CD14-positive monocyte (primary cell): ENCODE measurements at regions of chr9 and their contacts with region 1.

Region 1: GRCh38 chr9:114304416-114305188 is 18.3 kb upstream of the ORM1 start:
- DNase-seq: peak in 1 of 3 donors; percentile 2
- H3K4me3 ChIP-seq: no peak overlapping the region
- H3K4me3 Mint-ChIP-seq: no peak overlapping the region
- H3K27ac ChIP-seq: no peak overlapping the region
- H3K27ac Mint-ChIP-seq: no peak overlapping the region
- H3K4me1 ChIP-seq: no peaks in the 10 kb centered on the region
- H3K4me1 Mint-ChIP-seq: peaks cover 4% of the 10 kb centered on the region
- H3K27me3 ChIP-seq: no peaks in the 10 kb centered on the region
- H3K27me3 Mint-ChIP-seq: peaks cover 3 to 8% (median 6%) of the 10 kb centered on the region in 3 donors
- CTCF ChIP-seq: no peak

Region 2: GRCh38 chr9:114155263-114155972 is 149.2 kb before region 1 on chr9 and contains the start of gene COL27A1:
- intact Hi-C with region 1: loop called in 1 of 2 experiments (anchors 5 kb)
- DNase-seq: peak; percentile 41 to 61 (median 42)
- H3K4me3 ChIP-seq: peak within 1 kb of the TSS; percentile 31 to 72 (median 31)
- H3K4me3 Mint-ChIP-seq: peak within 1 kb of the TSS; percentile 75 to 95
- H3K27ac ChIP-seq: no peak within 1 kb of the TSS
- H3K27ac Mint-ChIP-seq: peak within 1 kb of the TSS in 2 of 7 donors; percentile 54 to 64
- H3K4me1 ChIP-seq: peaks cover 0 to 2% of the 10 kb centered on the region in 2 donors
- H3K4me1 Mint-ChIP-seq: peaks cover 10% of the 10 kb centered on the region
- H3K27me3 ChIP-seq: peaks cover 27 to 65% of the 10 kb centered on the region in 2 donors
- H3K27me3 Mint-ChIP-seq: peaks cover 58 to 79% (median 70%) of the 10 kb centered on the region in 3 donors
- CTCF ChIP-seq: peak; percentile 89
- polyA plus RNA-seq, gene COL27A1: 0.03 TPM in 1 of 3 donors, not detected in the others